CD8-positive, alpha-beta T cell (primary cell): ENCODE measurements at regions of chr6 and their contacts with region 1.

Region 1: DNA sequence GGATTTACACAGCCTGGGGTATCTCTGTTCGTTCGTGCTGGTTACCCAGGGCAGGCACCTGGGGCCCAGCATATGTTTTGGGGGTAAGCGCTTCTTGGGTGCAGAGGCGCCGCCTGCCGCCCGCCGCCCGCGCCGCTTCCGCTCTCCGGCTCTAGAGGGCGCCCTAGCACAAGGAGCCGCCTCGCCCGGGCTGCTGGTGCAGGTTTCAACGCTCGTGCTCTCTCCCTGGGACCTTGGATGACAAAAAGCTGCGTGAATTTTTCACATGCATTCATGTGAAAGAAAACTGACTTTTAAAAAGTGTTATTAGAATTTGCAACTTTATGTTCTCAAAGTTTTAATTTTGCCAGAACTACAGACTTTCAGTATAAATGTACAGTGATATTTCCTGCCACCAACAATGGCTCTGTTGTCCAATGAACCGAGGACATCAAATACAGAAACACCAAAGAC is 32.5 kb downstream of the PRR18 start:
- DNase-seq: peak; percentile 74 to 90 (median 82)
- ATAC-seq: peak; percentile 97
- H3K4me3 ChIP-seq: no peak overlapping the region
- H3K4me3 Mint-ChIP-seq: no peak overlapping the region
- H3K27ac ChIP-seq: no peak overlapping the region
- H3K27ac Mint-ChIP-seq: no peak overlapping the region
- H3K4me1 ChIP-seq: peaks cover 4% of the 10 kb centered on the region
- H3K4me1 Mint-ChIP-seq: peaks cover 6% of the 10 kb centered on the region
- H3K27me3 ChIP-seq: peaks cover 0 to 3% of the 10 kb centered on the region in 2 experiments
- H3K27me3 Mint-ChIP-seq: peaks cover 2% of the 10 kb centered on the region
- CTCF ChIP-seq: peak; percentile 100

Region 2: DNA sequence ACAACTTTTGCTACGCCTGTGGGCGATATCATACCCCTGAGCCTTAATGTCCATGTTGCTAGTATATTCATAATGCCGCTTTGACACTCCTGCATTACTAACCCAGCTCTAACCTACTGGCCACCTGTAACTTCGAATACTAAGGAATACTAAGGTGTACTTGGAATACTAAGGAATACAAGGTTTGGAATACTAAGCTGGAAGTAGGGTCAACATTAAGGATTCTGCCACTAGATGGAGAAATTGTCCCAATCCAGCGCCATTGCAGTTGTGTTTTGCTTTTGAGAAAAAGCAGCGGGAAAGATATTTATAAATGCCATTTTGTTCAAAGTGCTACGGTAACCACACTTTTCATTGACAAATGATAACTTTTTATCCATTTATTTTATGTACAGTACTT is 118.8 kb before region 1 on chr6:
- CTCF ChIA-PET with region 1: interaction called, 3 read pairs
- POLR2A ChIA-PET with region 1: no interaction called
- intact Hi-C with region 1: loop called in 1 of 2 experiments (anchors 1 kb)
- DNase-seq: no peak
- ATAC-seq: no peak
- H3K4me3 ChIP-seq: no peak overlapping the region
- H3K4me3 Mint-ChIP-seq: no peak overlapping the region
- H3K27ac ChIP-seq: no peak overlapping the region
- H3K27ac Mint-ChIP-seq: no peak overlapping the region
- H3K4me1 ChIP-seq: no peaks in the 10 kb centered on the region
- H3K4me1 Mint-ChIP-seq: no peaks in the 10 kb centered on the region
- H3K27me3 ChIP-seq: no peaks in the 10 kb centered on the region
- H3K27me3 Mint-ChIP-seq: peaks cover 14% of the 10 kb centered on the region
- CTCF ChIP-seq: no peak

Region 3: GRCh38 chr6:166258854-166259276 is 16.9 kb before region 1 on chr6:
- CTCF ChIA-PET with region 1: interaction called, 7 read pairs
- POLR2A ChIA-PET with region 1: no interaction called
- intact Hi-C with region 1: loop called in 1 of 2 experiments (anchors 1 kb)
- DNase-seq: peak in 7 of 9 experiments; percentile 29 to 72 (median 54)
- ATAC-seq: peak; percentile 66
- H3K4me3 ChIP-seq: no peak overlapping the region
- H3K4me3 Mint-ChIP-seq: peak overlapping the region; percentile 73
- H3K27ac ChIP-seq: no peak overlapping the region
- H3K27ac Mint-ChIP-seq: peak overlapping the region; percentile 96
- H3K4me1 ChIP-seq: peaks cover 20% of the 10 kb centered on the region
- H3K4me1 Mint-ChIP-seq: peaks cover 50% of the 10 kb centered on the region
- H3K27me3 ChIP-seq: no peaks in the 10 kb centered on the region
- H3K27me3 Mint-ChIP-seq: no peaks in the 10 kb centered on the region
- CTCF ChIP-seq: no peak

Region 4: GRCh38 chr6:166402582-166403277 is 127.0 kb after region 1 on chr6:
- CTCF ChIA-PET with region 1: interaction called, 38 read pairs
- POLR2A ChIA-PET with region 1: no interaction called
- intact Hi-C with region 1: loop called (anchors 1 kb)
- DNase-seq: no peak
- ATAC-seq: no peak
- H3K4me3 ChIP-seq: no peak overlapping the region
- H3K4me3 Mint-ChIP-seq: no peak overlapping the region
- H3K27ac ChIP-seq: no peak overlapping the region
- H3K27ac Mint-ChIP-seq: no peak overlapping the region
- H3K4me1 ChIP-seq: no peaks in the 10 kb centered on the region
- H3K4me1 Mint-ChIP-seq: peaks cover 6% of the 10 kb centered on the region
- H3K27me3 ChIP-seq: no peaks in the 10 kb centered on the region
- H3K27me3 Mint-ChIP-seq: no peaks in the 10 kb centered on the region
- CTCF ChIP-seq: no peak